SK-N-SH (cell line): ENCODE measurements at regions of chrX and their contacts with region 1.

Region 1: GRCh38 chrX:117985241-117985640 is 131.4 kb downstream of the KLHL13 start:
- DNase-seq: peak; percentile 16
- H3K4me3 ChIP-seq: no peak overlapping the region
- H3K27ac ChIP-seq: peak overlapping the region in 1 of 2 experiments; percentile 16; a peak in 1 of 4 replicates
- H3K4me1 ChIP-seq: peaks cover 0 to 8% of the 10 kb centered on the region in 2 experiments; a peak in 3 of 4 replicates
- H3K27me3 ChIP-seq: no peaks in the 10 kb centered on the region
- CTCF ChIP-seq: peak; percentile 40
- EP300 ChIP-seq: no peak
- RAD21 ChIP-seq: peak; percentile 61

Region 2: DNA sequence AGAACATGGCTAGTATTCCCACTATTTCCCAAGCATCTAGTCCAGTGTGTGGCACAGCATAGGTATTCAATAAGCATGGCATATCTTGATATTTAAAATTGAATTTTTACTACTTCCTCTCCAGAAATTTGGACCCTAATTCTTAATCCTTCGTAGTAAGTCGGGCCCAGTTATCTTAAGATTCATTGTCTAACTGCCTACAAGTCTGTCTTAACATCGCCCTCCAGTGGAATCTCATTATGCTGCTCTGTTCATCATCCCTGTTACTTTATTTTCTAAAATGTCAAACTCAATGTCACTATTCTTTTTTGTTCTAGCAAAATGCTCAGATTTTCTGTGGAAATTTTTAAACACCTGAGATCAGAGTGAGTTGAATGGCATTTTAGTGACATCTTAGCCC is 474.8 kb before region 1 on chrX:
- CTCF ChIA-PET with region 1: no interaction called
- POLR2A ChIA-PET with region 1: no interaction called
- DNase-seq: peak; percentile 0
- H3K4me3 ChIP-seq: no peak overlapping the region
- H3K27ac ChIP-seq: no peak overlapping the region
- H3K4me1 ChIP-seq: no peaks in the 10 kb centered on the region
- H3K27me3 ChIP-seq: no peaks in the 10 kb centered on the region
- CTCF ChIP-seq: peak; percentile 31; the same call in 1 of the 2 replicates
- EP300 ChIP-seq: no peak
- RAD21 ChIP-seq: peak; percentile 44

Region 3: DNA sequence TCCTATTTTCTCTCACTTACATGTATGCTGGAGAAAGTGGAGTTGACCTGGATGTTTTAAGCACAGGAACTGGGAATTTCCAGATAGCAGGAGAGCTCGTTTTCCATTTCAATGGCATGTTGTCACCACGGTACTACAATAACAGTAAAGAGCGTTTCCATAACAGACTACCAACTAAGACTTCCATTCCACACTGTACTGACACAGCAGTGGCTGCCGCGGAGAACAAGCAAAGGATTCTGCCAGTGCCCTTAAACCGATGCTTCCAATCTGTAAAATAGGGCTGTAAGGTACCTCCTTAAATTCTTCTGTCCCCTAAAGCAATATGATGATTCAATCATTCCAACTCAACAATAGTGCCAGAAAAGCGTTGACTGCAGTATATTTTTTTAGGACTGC is 12.5 kb before region 1 on chrX:
- CTCF ChIA-PET with region 1: interaction called, 35 read pairs
- POLR2A ChIA-PET with region 1: interaction called, 3 read pairs
- DNase-seq: no peak
- H3K4me3 ChIP-seq: peak overlapping the region; percentile 30 to 35; a peak in 3 of 4 replicates
- H3K27ac ChIP-seq: peak overlapping the region; percentile 64 to 76
- H3K4me1 ChIP-seq: peaks cover 0 to 4% of the 10 kb centered on the region in 2 experiments; a peak in 2 of 4 replicates
- H3K27me3 ChIP-seq: no peaks in the 10 kb centered on the region
- CTCF ChIP-seq: no peak
- EP300 ChIP-seq: no peak
- RAD21 ChIP-seq: no peak